ENCODE measurements at regions of chr12 and their contacts with region 1.

Region 1: DNA sequence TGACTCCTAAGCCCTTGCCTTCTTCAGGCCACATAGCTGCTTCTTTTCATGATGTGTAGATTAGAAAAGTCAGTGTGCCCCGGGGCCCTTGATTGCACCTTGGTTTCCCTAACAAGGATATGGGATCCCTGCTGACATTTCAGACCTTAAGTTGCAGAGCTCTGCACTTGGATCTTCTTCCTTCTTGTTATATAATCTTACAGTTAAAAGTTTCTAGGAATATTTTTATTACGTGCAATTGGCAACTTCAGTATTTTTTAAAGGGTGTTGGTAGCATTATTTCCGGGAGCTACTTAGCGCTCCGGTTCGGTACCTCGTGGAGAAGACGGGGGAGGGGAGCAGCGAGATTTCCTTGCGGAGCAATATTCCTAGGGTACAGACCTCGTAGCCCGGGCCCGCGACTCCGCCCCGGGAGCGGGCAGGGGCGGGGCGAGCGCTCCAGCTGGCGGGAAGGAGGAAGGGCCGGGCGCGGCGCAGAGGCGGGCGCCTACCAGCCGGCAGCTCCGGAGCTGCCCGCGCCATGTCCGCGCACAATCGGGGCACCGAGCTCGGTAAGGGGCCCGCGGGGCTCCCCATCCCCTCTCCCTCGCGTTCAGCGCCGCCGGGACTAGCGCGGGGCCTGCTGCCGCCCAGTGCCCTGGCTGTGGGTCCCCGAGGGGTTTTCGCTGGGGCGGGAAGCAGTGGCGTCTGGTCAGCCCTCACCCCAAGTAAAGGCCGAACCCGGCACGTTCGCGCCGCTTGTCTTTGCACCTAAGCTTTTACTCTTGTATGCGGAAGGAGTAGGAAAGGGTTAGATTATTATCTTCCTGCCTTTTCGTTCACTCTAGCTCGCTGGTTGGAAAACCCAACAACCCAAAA is at the start of gene DERA:
- DNase-seq: peak; percentile 85

Region 2: DNA sequence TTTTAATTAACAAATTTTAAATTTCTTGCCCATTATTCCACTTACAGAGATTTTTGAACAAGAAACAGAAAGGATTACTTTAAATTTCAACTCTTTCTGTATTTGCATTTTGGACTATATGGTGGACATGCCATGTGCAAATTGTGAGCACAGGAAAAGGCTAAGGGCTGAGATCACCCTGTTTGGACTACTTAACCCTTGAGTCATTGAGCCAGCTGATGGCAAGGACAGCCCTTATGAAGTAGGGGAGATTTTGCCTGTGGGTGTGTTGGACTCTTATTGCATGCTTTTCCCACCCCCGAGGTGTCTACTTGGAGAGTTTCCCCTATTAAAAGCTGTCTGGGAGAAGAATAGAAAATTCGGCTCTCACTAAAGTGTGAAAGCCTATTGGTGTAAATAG is 17.3 kb after region 1 on chr12:
- CTCF ChIA-PET with region 1: interaction called, 6 read pairs
- POLR2A ChIA-PET with region 1: interaction called, 16 read pairs
- DNase-seq: no peak

Region 3: DNA sequence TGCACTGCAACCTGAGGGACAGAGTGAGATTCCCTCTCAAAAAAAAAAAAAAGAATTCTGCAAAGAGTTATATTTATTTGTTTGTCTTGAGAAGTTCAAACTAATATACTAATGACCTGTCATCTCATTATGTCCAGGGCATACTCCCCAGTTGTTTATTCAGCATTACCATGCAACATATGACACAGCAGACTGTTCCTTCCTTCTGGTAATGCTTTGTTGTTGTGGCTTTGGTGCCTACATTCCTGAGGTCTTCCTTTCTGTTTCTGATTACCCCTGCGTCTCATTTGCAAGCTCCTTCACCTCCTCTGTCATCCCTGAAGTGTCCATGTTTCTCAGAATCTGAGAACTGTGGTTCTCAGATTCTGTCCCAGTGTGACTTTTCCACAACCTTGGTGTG is 55.3 kb after region 1 on chr12:
- CTCF ChIA-PET with region 1: no interaction called
- POLR2A ChIA-PET with region 1: no interaction called
- DNase-seq: no peak

Measured in HEK293T (cell line).